ENCODE measurements at regions of chr1 and their contacts with region 1.

Region 1: GRCh38 chr1:244047621-244048471 is 3.2 kb upstream of the ZBTB18 start:
- DNase-seq: peak; percentile 99 to 100
- ATAC-seq: peak; percentile 98
- H3K4me3 ChIP-seq: peak overlapping the region; percentile 58 to 82
- H3K27ac ChIP-seq: peak overlapping the region; percentile 50 to 88
- H3K4me1 ChIP-seq: no peaks in the 10 kb centered on the region
- H3K27me3 ChIP-seq: no peaks in the 10 kb centered on the region

Region 2: GRCh38 chr1:243713470-243714186 is 334.2 kb before region 1 on chr1:
- intact Hi-C with region 1: no loop called
- DNase-seq: no peak
- ATAC-seq: no peak
- H3K4me3 ChIP-seq: no peak overlapping the region
- H3K27ac ChIP-seq: no peak overlapping the region
- H3K4me1 ChIP-seq: peaks cover 1 to 3% of the 10 kb centered on the region in 2 donors
- H3K27me3 ChIP-seq: no peaks in the 10 kb centered on the region

Region 3: GRCh38 chr1:243850452-243851256 is 197.2 kb before region 1 on chr1:
- intact Hi-C with region 1: loop called in 1 of 2 experiments (anchors 5 kb)
- DNase-seq: peak; percentile 88 to 92
- ATAC-seq: peak; percentile 80
- H3K4me3 ChIP-seq: peak overlapping the region; percentile 93 to 100
- H3K27ac ChIP-seq: peak overlapping the region; percentile 49 to 95
- H3K4me1 ChIP-seq: no peaks in the 10 kb centered on the region
- H3K27me3 ChIP-seq: no peaks in the 10 kb centered on the region

Region 4: DNA sequence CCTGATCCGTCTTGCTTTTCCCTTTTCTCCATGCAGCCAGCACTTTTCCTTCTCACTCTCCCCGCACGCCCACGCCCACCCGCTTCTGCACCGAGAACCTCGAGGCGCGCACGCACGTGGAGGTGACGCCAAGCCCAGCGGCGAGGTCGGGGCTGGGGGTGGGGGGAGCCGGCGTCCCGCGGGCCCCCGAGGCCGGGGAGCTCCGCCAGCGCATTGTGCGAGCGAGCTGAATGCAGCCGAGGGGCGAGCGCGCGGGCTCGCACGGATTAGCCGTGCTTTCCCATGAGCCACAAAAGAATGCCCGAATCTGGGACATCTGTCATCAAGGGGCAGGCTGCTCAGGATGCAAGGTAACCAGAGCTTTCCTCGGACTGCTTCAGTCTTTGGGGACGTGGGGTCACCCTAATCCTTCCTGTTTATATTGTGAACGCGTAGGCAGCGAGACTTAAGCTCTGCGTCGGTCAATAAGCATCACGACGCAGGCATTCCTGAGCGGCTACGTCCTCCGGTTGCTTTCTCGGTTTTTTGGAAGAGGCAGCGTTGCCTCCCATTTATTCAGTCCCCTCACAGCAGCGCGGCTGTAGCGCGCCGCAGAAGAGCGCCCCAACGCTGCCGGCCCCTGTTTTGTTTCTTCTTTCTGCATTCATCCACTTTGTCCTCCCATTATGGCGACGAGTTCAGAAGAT is 130.5 kb before region 1 on chr1:
- intact Hi-C with region 1: loop called in 1 of 2 experiments (anchors 5 kb)
- DNase-seq: peak in 1 of 2 donors; percentile 81
- ATAC-seq: peak; percentile 65
- H3K4me3 ChIP-seq: peak overlapping the region; percentile 68 to 71
- H3K27ac ChIP-seq: no peak overlapping the region
- H3K4me1 ChIP-seq: no peaks in the 10 kb centered on the region
- H3K27me3 ChIP-seq: no peaks in the 10 kb centered on the region